CD4-positive, alpha-beta memory T cell (primary cell): ENCODE measurements at regions of chr12 and their contacts with region 1.

Region 1: DNA sequence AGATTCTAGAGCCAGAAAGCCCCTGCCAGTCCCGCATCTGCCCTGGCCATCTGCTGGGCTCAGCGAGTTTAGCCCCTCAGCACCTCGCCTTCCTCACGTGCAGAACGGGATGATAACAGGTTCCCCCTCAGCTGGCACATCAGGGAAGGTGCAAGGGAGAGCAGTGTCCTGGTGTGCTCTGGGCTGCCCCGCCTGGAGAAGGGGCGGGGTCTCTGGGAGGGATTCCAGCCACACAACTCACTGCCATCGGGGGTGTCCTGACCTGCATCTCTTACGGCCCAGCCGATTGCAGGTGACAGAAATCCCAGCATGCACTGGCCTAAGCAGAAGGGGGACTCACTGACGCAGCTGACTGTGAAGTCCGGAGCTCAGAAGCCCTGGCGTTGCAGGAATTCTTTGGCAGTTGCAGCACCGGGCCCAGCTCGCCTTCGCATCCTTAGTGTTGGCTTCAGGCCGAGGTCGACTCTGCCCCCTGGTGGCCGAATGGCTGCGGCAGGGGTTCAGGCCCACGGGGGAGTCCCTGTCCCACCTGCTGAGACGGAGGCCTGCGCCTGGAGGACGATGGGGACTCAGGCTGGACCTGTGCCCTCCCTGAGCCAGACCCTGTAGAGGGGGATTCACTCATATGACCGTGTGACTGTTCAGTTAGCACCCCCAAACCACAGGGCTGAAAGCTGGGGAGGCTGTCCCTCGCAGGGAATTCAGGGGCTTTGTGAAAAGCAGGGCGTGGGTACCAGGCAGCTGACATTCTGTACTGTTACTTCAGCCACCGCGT is 178.6 kb downstream of the ADGRD1 start:
- DNase-seq: peak; percentile 54 to 68 (median 58)
- H3K4me3 ChIP-seq: no peak overlapping the region
- H3K4me3 Mint-ChIP-seq: no peak overlapping the region
- H3K27ac ChIP-seq: no peak overlapping the region
- H3K27ac Mint-ChIP-seq: peak overlapping the region in 1 of 7 donors; percentile 31
- H3K4me1 ChIP-seq: peaks cover 6% of the 10 kb centered on the region
- H3K4me1 Mint-ChIP-seq: peaks cover 0 to 2% (median under 1%) of the 10 kb centered on the region in 4 donors
- H3K27me3 ChIP-seq: no peaks in the 10 kb centered on the region
- H3K27me3 Mint-ChIP-seq: no peaks in the 10 kb centered on the region

Region 2: DNA sequence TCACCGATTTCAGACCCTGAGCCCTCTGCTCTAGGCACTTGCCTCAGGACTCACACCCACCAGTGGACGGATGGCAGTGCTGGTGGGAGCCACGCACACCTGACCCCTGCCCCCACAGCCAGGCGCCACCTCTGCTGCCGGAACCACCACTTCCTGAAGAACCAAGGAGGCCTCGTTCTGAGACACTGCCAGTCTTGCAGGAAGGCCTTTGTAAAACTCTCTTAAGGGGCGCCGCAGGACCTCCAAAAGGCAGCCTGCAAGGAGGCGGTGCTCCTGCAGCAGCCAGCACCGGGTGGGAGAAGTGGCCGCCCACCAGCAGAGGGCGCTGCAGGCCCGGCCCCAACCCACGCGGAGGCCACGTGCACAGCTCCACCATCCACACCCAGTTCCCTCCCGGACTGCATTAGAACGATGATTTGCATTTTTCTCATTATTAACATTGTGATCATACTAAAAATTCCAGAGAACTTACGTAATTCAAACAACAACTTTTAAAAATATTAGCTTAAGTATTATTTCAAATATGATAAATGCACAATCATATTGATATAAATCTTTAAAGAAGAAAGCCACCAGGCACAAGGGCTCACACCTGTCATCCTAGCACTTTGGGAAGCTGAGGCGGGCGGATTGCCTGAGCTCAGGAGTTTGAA is 306.0 kb before region 1 on chr12:
- CTCF ChIA-PET with region 1: interaction called, 94 read pairs
- POLR2A ChIA-PET with region 1: interaction called, 3 read pairs
- intact Hi-C with region 1: loop called (anchors 1 kb)
- DNase-seq: peak; percentile 61 to 70 (median 68)
- H3K4me3 ChIP-seq: no peak overlapping the region
- H3K4me3 Mint-ChIP-seq: no peak overlapping the region
- H3K27ac ChIP-seq: no peak overlapping the region
- H3K27ac Mint-ChIP-seq: peak overlapping the region in 3 of 7 donors; percentile 4 to 61 (median 6)
- H3K4me1 ChIP-seq: no peaks in the 10 kb centered on the region
- H3K4me1 Mint-ChIP-seq: peaks cover 10 to 19% (median 13%) of the 10 kb centered on the region in 4 donors
- H3K27me3 ChIP-seq: no peaks in the 10 kb centered on the region
- H3K27me3 Mint-ChIP-seq: no peaks in the 10 kb centered on the region

Region 3: GRCh38 chr12:131035268-131035681 is 97.0 kb before region 1 on chr12:
- CTCF ChIA-PET with region 1: no interaction called
- POLR2A ChIA-PET with region 1: no interaction called
- intact Hi-C with region 1: no loop called
- DNase-seq: no peak
- H3K4me3 ChIP-seq: no peak overlapping the region
- H3K4me3 Mint-ChIP-seq: peak overlapping the region in 1 of 8 donors; percentile 17
- H3K27ac ChIP-seq: no peak overlapping the region
- H3K27ac Mint-ChIP-seq: no peak overlapping the region
- H3K4me1 ChIP-seq: no peaks in the 10 kb centered on the region
- H3K4me1 Mint-ChIP-seq: no peaks in the 10 kb centered on the region
- H3K27me3 ChIP-seq: no peaks in the 10 kb centered on the region
- H3K27me3 Mint-ChIP-seq: peaks cover 0 to 3% of the 10 kb centered on the region in 2 donors

Region 4: DNA sequence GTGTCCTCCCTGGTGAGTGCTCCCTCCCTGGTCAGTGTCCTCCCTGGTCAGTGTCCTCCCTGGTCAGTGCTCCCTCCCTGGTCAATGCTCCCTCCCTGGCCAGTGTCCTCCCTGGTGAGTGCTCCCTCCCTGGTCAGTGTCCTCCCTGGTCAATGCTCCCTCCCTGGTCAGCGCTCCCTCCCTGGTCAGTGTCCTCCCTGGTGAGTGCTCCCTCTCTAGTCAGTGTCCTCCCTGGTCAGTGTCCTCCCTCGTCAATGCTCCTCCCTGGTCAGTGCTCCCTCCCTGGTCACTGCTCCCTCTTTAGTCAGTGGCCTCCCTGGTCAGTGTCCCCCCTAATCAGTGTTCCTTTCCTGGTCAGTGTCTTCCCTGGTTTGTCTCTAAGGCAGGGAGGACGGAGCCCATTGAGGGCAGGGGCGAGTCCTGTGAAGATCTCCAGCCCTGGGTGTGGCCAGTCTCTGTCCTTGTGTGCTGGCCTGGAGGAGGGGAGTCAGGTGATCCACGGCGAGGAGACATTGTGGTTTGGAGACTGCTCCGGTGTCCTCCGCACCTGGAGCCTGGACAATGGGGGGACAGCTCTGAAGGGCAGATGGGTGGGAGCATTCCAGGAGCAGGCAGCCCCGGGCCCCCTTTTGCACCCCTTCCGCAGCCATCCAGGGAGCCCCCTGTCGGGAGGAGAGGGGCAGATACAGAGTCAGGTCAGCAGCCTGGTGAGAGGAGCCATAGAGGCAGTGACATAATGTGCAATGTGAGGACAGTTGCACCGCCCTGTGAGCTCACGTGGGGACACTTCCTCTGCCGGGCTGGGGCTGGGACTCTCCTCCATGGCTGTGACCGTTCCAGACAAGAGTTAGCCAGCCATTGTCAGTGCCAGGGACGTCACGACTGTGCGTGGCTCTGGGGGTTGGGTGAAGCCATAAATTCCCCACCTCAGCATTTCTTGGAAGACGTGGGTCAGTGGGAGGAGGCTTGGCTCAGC is 85.2 kb before region 1 on chr12:
- CTCF ChIA-PET with region 1: no interaction called
- POLR2A ChIA-PET with region 1: no interaction called
- intact Hi-C with region 1: no loop called
- DNase-seq: no peak
- H3K4me3 ChIP-seq: no peak overlapping the region
- H3K4me3 Mint-ChIP-seq: no peak overlapping the region
- H3K27ac ChIP-seq: no peak overlapping the region
- H3K27ac Mint-ChIP-seq: peak overlapping the region in 2 of 7 donors; percentile 35 to 54
- H3K4me1 ChIP-seq: no peaks in the 10 kb centered on the region
- H3K4me1 Mint-ChIP-seq: peaks cover 0 to 3% (median 0%) of the 10 kb centered on the region in 4 donors
- H3K27me3 ChIP-seq: no peaks in the 10 kb centered on the region
- H3K27me3 Mint-ChIP-seq: no peaks in the 10 kb centered on the region

Region 5: GRCh38 chr12:131121705-131122405 is 10.4 kb before region 1 on chr12:
- CTCF ChIA-PET with region 1: interaction called, 11 read pairs
- POLR2A ChIA-PET with region 1: no interaction called
- intact Hi-C with region 1: no loop called
- DNase-seq: no peak
- H3K4me3 ChIP-seq: no peak overlapping the region
- H3K4me3 Mint-ChIP-seq: no peak overlapping the region
- H3K27ac ChIP-seq: no peak overlapping the region
- H3K27ac Mint-ChIP-seq: no peak overlapping the region
- H3K4me1 ChIP-seq: no peaks in the 10 kb centered on the region
- H3K4me1 Mint-ChIP-seq: no peaks in the 10 kb centered on the region
- H3K27me3 ChIP-seq: no peaks in the 10 kb centered on the region
- H3K27me3 Mint-ChIP-seq: peaks cover 0 to 2% of the 10 kb centered on the region in 2 donors

Region 6: GRCh38 chr12:131287938-131288764 is 155.8 kb after region 1 on chr12:
- CTCF ChIA-PET with region 1: no interaction called
- POLR2A ChIA-PET with region 1: no interaction called
- intact Hi-C with region 1: no loop called
- DNase-seq: no peak
- H3K4me3 ChIP-seq: no peak overlapping the region
- H3K4me3 Mint-ChIP-seq: no peak overlapping the region
- H3K27ac ChIP-seq: no peak overlapping the region
- H3K27ac Mint-ChIP-seq: no peak overlapping the region
- H3K4me1 ChIP-seq: no peaks in the 10 kb centered on the region
- H3K4me1 Mint-ChIP-seq: no peaks in the 10 kb centered on the region
- H3K27me3 ChIP-seq: no peaks in the 10 kb centered on the region
- H3K27me3 Mint-ChIP-seq: peaks cover 0 to 5% of the 10 kb centered on the region in 2 donors